ENCODE measurements at regions of chr5 and their contacts with region 1.

Region 1: GRCh38 chr5:68287976-68288706 is 72.6 kb downstream of the PIK3R1 start:
- DNase-seq: peak; percentile 75
- ATAC-seq: peak; percentile 90 to 91

Region 2: DNA sequence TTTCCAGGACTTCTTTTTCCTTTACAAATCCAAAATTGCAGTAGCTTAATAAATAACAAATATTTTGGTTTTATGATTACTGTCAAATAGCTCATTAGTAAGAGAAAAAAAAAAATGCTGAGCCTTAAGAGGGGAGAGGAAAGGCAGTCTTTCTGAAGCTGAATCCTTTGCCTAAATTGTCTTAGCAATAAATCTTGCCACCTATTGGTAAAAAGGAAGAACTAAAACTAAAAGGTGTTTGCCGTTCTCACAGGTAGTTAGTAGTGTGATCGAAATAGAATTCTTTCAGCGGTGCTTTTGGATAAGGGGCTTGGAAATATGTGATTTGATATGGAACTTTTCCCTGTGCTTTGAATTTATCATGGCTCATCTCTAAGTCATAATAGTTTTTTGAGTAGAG is 41.3 kb before region 1 on chr5:
- intact Hi-C with region 1: no loop called
- DNase-seq: no peak
- ATAC-seq: no peak

Region 3: GRCh38 chr5:68343421-68343826 is 55.3 kb after region 1 on chr5:
- intact Hi-C with region 1: loop called in 1 of 2 experiments (anchors 2 kb)
- DNase-seq: peak; percentile 74
- ATAC-seq: peak; percentile 88 to 97

Region 4: DNA sequence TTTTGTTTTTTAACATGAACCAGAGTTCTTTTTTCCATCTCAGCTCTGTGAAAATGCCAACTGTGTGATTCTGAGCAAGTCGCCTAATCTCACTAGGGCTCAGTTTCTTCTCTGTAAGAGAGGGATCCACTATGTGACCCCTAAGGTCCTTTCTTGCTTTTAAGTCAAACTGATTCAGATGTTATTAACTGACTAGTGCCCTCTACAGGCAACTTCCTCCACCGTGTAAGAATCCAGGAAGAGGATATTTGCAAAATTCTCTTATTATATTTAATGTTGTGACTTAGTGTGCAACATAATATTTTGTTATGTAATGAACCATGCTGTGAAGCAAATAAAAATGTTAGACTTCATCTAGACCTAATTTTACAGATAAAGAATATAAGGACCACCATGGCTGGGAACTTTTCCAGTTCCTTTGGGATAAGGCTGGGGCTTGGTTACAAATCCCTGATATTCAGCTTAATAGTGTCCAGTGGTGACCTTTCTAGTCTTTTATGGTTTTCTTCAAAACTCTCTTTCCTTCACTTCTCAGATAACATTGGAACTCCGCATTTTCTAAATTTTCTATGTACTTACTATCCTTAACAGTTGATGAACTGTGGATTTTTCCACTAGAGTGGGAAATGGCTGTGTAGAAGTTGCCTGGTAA is 172.1 kb after region 1 on chr5:
- intact Hi-C with region 1: loop called (anchors 1 to 5 kb)
- DNase-seq: no peak
- ATAC-seq: peak; percentile 54 to 60

Region 5: DNA sequence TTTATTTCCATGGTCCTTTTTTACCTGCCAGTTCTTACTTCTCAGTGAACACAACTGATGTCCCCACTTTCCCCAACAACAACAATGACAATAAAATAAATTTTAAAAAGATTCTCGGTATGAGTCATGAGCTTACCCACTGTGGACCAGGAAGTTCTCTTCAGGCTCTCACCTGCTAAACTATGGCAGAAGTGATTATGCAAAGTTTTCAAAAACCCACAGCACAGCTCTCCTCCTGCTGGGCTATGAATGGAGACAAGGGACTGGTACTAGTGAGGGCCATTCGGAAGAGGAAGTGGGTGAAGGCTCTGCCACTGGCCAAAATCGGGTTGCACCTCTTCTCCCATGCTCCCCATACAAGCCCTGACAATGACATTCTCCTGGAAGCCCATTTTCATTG is 356.8 kb after region 1 on chr5:
- intact Hi-C with region 1: loop called in 1 of 2 experiments (anchors 10 kb)
- DNase-seq: no peak
- ATAC-seq: no peak

Region 6: GRCh38 chr5:68962757-68963484 is 674.8 kb after region 1 on chr5:
- intact Hi-C with region 1: loop called (anchors 5 to 10 kb)
- DNase-seq: peak; percentile 56
- ATAC-seq: peak; percentile 84 to 90

Region 7: DNA sequence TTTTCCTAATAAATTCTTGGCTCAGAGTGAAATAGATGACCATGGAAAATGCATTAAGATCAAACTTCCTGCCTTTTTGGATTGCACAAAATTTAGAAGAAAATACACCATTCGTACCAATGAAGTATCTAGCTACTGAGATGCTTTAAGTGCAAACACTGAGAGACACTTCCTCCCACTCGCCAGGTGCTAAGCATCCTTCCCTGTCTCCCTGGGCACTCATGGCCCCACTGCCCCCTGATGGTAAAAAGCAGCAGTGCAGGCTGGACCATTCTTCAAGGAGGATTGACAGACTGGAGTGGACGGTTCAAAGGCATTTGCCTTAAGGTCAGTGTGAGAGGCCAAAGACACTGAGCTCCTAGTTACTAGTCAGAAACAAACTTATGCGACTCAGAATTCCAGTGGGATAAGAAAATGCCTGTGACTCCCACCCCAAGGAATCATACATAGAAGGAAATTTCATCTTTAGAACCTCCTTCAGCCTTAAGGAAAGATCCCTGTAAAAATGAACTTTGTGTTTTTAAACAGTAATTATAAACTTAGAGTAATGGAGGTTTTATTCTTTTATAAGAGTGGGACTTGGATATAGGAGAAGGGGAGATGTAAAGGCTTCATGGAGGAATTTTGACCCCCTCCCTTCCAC is 719.7 kb after region 1 on chr5:
- intact Hi-C with region 1: loop called in 1 of 2 experiments (anchors 2 kb)
- DNase-seq: peak; percentile 34
- ATAC-seq: peak; percentile 71